Calu3 (cell line): ENCODE measurements at regions of chr19 and their contacts with region 1.

Region 1: DNA sequence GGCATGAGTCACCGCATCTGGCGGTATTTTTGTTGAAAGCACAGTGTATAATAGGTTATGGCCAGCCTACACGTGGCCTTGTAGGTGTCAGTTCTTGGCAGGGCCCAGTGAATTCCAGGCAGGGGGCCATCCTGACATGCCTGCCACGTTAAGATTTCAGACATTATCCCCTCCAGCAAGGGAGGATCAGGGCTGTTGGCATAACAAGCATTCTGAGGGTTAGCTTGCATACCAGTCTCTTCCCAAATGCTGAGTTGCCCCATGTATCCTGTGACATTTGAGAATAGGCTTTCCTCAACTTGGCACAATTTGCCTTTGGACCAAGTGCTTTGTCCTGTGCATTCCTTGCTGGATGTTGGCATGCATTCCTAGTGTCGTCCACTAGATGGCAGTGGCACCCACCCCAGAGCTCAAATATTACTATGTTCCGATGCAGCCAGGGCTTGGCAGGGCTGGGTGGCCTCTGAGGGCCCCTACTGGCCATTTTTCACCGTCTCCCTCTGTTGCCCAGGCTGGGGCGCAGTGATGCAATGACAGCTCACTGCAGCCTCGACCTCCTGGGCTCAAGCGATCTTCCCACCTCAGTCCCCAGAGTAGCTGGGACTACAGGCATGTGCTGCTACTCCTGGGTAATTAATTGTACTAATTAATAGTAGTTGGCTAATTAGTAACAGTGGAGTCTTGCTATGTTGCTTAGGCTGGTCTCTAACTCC is 31.2 kb downstream of the NLRP12 start:
- DNase-seq: peak; percentile 94
- H3K4me3 Mint-ChIP-seq: no peak overlapping the region
- H3K27ac Mint-ChIP-seq: no peak overlapping the region
- H3K4me1 Mint-ChIP-seq: no peaks in the 10 kb centered on the region
- H3K27me3 Mint-ChIP-seq: no peaks in the 10 kb centered on the region
- CTCF ChIP-seq: peak; percentile 98

Region 2: GRCh38 chr19:53195265-53195903 is 597.5 kb before region 1 on chr19:
- CTCF ChIA-PET with region 1: interaction called, 9 read pairs
- intact Hi-C with region 1: loop called (anchors 5 kb)
- DNase-seq: peak; percentile 63
- H3K4me3 Mint-ChIP-seq: no peak overlapping the region
- H3K27ac Mint-ChIP-seq: no peak overlapping the region
- H3K4me1 Mint-ChIP-seq: no peaks in the 10 kb centered on the region
- H3K27me3 Mint-ChIP-seq: no peaks in the 10 kb centered on the region
- CTCF ChIP-seq: peak; percentile 75

Region 3: DNA sequence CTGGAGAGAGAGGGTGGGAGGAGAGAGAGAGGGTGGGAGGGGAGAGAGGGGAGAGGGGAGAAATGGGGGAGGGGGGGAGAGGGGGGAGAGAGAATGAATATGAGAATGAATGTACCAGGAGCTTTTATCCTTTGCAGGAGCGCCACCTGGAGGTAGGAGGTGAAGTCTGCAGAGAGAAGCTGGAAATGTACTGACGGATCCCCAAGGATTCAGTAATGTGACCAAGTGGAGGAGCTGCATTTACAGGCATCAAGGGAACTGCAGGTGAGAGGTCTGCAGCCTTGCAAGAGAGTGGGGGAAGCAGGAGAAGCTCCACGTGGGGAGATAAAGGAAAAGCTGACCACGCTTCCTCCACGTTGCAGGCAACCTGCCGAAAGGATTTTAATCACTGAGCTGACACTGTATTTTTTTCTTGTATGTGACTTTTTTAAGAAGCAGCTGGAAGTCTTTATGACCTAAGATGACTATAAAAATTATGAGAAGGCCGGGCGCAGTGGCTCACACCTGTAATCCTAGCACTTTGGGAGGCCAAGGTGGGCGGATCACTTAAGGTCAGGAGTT is 237.1 kb after region 1 on chr19:
- CTCF ChIA-PET with region 1: interaction called, 19 read pairs
- intact Hi-C with region 1: loop called (anchors 1 kb)
- DNase-seq: peak; percentile 83
- H3K4me3 Mint-ChIP-seq: no peak overlapping the region
- H3K27ac Mint-ChIP-seq: no peak overlapping the region
- H3K4me1 Mint-ChIP-seq: peaks cover 21% of the 10 kb centered on the region
- H3K27me3 Mint-ChIP-seq: no peaks in the 10 kb centered on the region
- CTCF ChIP-seq: peak; percentile 83